ENCODE measurements at regions of chr20 and their contacts with region 1.

Region 1: DNA sequence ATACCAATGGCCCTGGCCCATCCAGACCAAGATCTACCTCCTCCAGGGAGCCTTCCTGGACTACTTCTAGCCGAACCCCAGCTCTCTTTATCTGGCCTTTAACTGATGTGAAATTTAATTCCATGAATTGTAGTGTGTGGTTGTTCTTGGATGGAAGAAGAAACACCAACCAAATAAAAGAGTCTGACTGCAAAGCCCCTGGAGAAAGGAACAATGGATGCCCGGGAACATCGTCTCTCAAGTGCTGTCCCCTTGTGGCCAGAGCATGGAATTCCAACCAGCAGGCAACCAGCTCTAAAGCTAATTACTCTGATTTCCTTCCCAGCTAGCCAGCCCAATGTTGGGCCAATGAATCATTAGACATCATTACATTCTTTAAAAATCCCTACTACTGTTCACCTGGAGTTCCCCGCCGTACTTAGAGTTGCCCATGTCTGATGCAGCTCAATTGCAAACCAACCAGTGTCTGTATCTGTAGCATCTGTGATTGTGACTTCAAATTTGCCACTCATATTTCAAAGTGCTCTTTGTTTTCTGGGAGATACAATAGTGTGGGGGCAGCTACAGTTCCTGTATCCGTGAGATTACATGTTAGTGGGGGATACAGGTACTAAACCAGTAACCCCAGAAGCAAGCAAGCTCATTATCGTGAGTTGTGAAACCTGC is 141.1 kb downstream of the ANKRD60 start:
- DNase-seq: no peak
- H3K4me3 ChIP-seq: no peak overlapping the region
- CTCF ChIP-seq: peak; percentile 84

Region 2: GRCh38 chr20:57622579-57623377 is 464.5 kb before region 1 on chr20:
- CTCF ChIA-PET with region 1: interaction called, 17 read pairs
- POLR2A ChIA-PET with region 1: no interaction called
- DNase-seq: no peak
- H3K4me3 ChIP-seq: no peak overlapping the region
- CTCF ChIP-seq: peak; percentile 74

Region 3: GRCh38 chr20:57654363-57654997 is 432.8 kb before region 1 on chr20:
- CTCF ChIA-PET with region 1: interaction called, 59 read pairs
- POLR2A ChIA-PET with region 1: no interaction called
- DNase-seq: no peak
- H3K4me3 ChIP-seq: no peak overlapping the region
- CTCF ChIP-seq: peak; percentile 89

Region 4: GRCh38 chr20:58073945-58074856 is 13.1 kb before region 1 on chr20:
- CTCF ChIA-PET with region 1: interaction called, 11 read pairs
- POLR2A ChIA-PET with region 1: no interaction called
- DNase-seq: no peak
- H3K4me3 ChIP-seq: no peak overlapping the region
- CTCF ChIP-seq: no peak

Region 5: DNA sequence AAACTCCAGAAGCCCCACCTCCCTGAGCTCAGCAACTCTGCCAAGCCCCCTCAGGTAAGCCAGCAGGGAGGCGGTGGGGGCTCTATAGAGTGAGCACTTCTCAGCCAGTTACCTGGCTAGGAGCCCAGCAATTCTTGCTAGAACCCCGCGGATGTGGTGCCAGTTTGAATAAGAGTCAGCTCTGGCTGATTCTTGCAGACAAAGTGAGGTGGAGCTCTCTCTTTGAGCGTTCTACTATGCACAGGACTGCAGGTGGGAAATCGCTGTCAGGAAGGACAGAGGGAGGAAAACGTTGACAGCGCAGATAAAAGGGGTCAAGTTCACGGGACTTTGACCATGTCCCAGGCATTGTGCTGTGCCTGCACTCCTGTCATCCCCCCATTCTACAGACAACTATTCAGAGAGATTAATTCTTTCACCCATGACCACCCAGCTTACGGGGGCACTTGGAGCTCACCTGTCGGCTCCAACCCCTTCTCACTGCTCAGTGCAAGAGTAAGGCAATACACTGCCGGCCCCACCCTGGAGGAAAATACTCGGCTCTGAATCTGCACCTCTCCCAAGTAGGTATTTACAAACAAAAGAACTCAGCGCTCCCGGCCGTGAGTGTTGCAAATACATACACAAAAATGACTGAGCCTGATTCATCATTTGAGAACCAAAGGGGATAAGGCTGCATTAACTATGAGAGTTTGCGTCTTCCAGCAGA is 48.3 kb after region 1 on chr20:
- CTCF ChIA-PET with region 1: interaction called, 12 read pairs
- POLR2A ChIA-PET with region 1: no interaction called
- DNase-seq: no peak
- H3K4me3 ChIP-seq: no peak overlapping the region
- CTCF ChIP-seq: no peak

Measured in AG04449 (cell line).